A673 (cell line): ENCODE measurements at regions of chr4 and their contacts with region 1.

Region 1: DNA sequence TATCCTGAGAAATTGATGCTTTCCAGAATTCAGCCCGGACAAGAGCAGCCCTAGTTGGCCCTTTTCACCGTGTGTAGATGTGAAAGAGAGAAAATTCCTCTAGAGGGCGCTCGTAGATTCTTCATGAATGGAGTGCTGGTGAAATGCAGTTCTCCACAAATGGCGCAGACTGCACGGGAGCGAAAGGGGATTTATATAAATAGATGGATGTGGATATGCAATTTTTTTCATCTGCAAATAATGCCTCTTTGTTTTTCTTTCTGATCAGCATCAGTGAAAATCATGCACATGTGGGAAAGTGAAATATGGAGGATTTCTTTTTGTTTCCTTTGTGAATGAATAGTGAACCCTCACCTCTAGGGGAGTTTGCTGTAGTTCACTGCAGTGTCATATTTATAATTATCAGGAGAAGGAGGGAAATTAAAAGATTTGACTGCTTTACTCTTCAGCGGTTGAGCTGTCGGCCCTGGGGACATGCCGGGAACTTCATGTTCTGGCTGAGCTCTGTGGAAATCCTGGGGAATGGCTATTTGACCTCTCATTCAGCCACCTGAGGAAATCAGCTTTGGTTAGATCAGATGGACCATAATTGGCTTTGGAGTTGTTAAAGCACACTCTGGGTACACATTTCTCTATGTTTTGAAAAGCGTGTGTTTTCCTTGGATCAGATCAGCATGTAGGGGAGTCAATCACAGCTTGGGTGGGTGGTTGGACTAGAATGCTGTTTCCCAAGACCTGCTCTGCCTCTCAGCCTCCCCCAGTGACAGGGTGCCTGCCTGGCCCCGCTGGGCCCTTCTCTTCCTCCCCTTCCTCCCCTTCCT is 115.0 kb upstream of the SHISA3 start:
- DNase-seq: peak; percentile 85
- H3K4me3 ChIP-seq: no peak overlapping the region
- H3K27ac ChIP-seq: no peak overlapping the region
- H3K4me1 ChIP-seq: no peaks in the 10 kb centered on the region
- H3K27me3 ChIP-seq: no peaks in the 10 kb centered on the region
- CTCF ChIP-seq: peak; percentile 80

Region 2: GRCh38 chr4:41957634-41958033 is 324.7 kb before region 1 on chr4:
- CTCF ChIA-PET with region 1: no interaction called
- POLR2A ChIA-PET with region 1: no interaction called
- intact Hi-C with region 1: loop called (anchors 5 kb)
- DNase-seq: peak; percentile 55
- H3K4me3 ChIP-seq: no peak overlapping the region
- H3K27ac ChIP-seq: no peak overlapping the region
- H3K4me1 ChIP-seq: no peaks in the 10 kb centered on the region
- H3K27me3 ChIP-seq: no peaks in the 10 kb centered on the region
- CTCF ChIP-seq: peak; percentile 61

Region 3: GRCh38 chr4:42248984-42249383 is 33.3 kb before region 1 on chr4:
- CTCF ChIA-PET with region 1: interaction called, 11 read pairs
- POLR2A ChIA-PET with region 1: no interaction called
- intact Hi-C with region 1: no loop called
- DNase-seq: no peak
- H3K4me3 ChIP-seq: no peak overlapping the region
- H3K27ac ChIP-seq: no peak overlapping the region
- H3K4me1 ChIP-seq: no peaks in the 10 kb centered on the region
- H3K27me3 ChIP-seq: no peaks in the 10 kb centered on the region
- CTCF ChIP-seq: no peak